AG04450 (cell line): ENCODE measurements at regions of chr2 and their contacts with region 1.

Region 1: GRCh38 chr2:227657199-227657845 is 9.3 kb upstream of the SCYGR5 start:
- DNase-seq: no peak
- H3K4me3 ChIP-seq: no peak overlapping the region
- H3K27ac ChIP-seq: no peak overlapping the region
- H3K27me3 ChIP-seq: no peaks in the 10 kb centered on the region
- CTCF ChIP-seq: no peak

Region 2: DNA sequence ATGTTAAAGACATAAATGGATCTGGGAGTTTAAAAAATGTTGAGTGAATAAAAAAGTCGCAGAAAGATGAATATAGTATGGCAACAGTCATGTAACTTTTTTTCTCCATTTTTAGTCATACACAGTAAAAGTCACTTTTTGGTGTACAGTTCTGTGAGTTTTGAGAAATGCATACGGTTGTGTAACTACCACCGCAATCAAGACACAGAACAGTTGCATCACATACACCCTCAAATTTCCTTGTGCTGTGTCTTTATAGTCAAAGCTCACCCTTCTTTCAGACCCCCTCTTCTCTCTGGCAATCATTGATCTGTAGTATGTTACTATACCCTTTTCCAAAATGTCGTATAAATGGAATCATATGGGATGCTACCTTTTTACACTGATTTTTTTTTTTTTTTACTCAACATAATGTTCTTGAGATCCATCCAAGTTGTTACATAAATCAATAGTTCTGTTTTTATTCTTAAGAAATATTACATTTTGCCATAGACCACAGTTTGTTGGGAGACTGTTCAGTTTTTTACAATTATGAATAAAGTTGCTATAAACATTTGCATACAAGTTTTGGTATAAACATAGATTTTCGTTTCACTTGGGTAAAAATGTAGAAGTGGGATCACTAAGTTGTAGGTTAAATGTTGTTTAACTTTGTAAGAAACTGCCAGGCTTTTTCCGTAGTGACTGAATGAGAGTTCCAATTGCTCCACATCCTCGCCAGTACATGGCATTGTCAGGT is 220.7 kb before region 1 on chr2:
- CTCF ChIA-PET with region 1: no interaction called
- POLR2A ChIA-PET with region 1: no interaction called
- DNase-seq: no peak
- H3K4me3 ChIP-seq: no peak overlapping the region
- H3K27ac ChIP-seq: no peak overlapping the region
- H3K27me3 ChIP-seq: no peaks in the 10 kb centered on the region
- CTCF ChIP-seq: no peak

Region 3: DNA sequence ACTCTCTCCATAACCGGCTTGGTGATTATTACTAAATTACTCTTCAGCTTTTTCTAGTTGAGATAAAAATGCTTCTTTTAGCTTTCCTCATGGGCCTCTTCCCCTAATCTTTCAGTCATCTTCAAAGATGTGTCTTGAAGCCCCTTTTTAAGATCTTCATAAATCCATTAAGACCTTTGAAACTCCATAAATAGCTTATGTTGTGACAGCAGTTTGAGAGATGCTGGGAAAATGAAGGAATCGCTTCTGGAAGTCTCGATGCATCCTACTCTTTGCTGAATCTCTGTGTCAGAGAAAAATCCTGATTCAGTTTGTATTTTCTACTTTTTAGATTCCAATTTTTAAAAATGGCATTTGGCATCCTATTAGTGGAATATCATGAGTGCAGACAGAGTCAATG is 27.0 kb before region 1 on chr2:
- CTCF ChIA-PET with region 1: interaction called, 17 read pairs
- POLR2A ChIA-PET with region 1: no interaction called
- DNase-seq: no peak
- H3K4me3 ChIP-seq: no peak overlapping the region
- H3K27ac ChIP-seq: no peak overlapping the region
- H3K27me3 ChIP-seq: no peaks in the 10 kb centered on the region
- CTCF ChIP-seq: no peak

Region 4: GRCh38 chr2:227643990-227644551 is 13.3 kb before region 1 on chr2:
- CTCF ChIA-PET with region 1: interaction called, 16 read pairs
- POLR2A ChIA-PET with region 1: no interaction called
- DNase-seq: no peak
- H3K4me3 ChIP-seq: no peak overlapping the region
- H3K27ac ChIP-seq: no peak overlapping the region
- H3K27me3 ChIP-seq: no peaks in the 10 kb centered on the region
- CTCF ChIP-seq: no peak

Region 5: DNA sequence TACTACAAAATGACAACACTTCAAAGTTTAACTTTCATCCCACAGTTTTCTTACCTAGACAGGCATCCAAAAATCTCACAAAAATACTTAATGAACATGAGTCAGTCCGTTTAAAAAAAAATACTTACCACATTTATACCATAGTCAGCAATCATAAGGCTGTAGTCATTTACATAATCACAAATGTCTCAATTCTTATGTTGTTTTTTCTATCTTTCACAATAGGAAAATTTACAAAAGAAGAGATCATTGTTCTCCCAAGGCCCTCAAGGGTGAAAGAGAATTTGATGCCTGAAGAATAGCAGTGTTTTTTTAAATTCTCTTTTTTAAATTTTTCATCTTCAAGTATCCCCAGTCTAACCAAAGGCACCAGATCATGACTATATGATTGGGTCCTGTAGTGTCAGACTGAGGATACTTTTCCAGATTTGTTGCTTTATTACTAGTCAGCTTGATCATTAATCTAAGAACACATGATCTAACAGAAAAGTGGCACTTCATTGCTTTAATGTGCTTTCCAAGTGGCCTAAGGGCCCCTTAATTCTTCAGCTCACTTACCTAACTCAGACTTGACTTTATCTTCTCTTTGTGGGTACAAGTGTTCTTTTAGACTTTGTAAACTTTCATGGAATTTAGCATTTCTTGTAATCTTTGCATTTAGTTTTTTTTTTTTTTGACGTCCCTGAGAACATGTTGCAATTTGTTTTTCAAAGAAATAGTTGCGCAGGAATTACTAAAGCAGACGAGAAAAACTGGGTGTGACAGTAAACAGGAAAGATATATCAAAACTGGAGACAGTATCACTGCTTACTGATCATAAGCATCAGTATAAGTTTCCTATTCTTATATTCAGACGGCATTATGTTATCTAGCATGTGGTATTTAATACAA is 14.1 kb after region 1 on chr2:
- CTCF ChIA-PET with region 1: interaction called, 16 read pairs
- POLR2A ChIA-PET with region 1: no interaction called
- DNase-seq: no peak
- H3K4me3 ChIP-seq: no peak overlapping the region
- H3K27ac ChIP-seq: no peak overlapping the region
- H3K27me3 ChIP-seq: no peaks in the 10 kb centered on the region
- CTCF ChIP-seq: no peak

Region 6: GRCh38 chr2:227766373-227766883 is 109.1 kb after region 1 on chr2:
- CTCF ChIA-PET with region 1: interaction called, 92 read pairs
- POLR2A ChIA-PET with region 1: interaction called, 3 read pairs
- DNase-seq: peak; percentile 50
- H3K4me3 ChIP-seq: no peak overlapping the region
- H3K27ac ChIP-seq: peak overlapping the region; percentile 21
- H3K27me3 ChIP-seq: no peaks in the 10 kb centered on the region
- CTCF ChIP-seq: peak; percentile 83